Sciatic nerve (tissue), 2 donors: ENCODE measurements at regions of chr12 and their contacts with region 1.

Region 1: DNA sequence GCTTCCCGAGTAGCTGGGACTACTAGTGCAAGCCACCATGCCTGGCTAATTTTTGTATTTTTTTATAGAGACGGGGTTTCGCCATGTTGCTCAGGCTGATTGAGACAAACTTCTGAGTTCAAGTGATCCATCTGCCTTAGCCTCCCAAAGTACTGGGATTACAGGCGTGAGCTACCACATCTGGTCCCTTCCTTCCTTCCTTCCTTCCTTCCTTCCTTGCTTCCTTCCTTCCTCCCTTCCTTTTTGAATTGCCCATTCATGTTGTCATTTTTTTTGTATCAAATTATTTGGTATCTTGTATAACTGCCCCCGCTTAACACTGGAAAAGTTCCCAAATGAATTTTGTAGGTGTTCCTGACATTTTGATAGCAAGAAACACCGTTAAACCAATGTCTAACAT is 11.7 kb downstream of the RAD9B start:
- DNase-seq: no peak
- ATAC-seq: no peak

Region 2: DNA sequence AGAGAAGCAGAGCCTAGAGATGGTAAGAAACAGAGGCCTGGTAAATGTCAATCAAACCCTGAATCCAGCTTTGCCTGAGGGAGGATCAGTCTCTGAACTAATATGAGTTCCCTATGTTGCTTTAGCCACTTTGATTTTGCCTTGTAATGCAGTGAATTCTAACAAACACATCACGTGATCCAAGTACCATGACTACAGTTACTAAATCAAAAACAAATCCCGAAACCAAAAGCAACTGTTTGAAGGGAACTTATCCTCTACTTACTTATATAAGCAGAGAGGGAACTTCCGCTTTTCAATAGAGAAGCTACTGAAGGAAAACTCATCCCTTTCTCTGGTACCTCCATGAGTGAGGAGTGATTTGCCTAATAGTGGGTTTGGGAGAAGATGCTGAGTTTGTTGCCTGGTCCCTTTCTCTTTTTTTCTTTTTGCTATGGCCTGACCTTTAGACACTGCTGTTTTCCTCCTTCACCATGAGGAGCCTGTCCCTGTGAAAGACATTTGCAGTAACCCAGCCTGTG is 77.0 kb after region 1 on chr12:
- intact Hi-C with region 1: loop called (anchors 10 kb)
- DNase-seq: no peak
- ATAC-seq: peak; percentile 90